Heart right ventricle (tissue), 16 donors: ENCODE measurements at regions of chr2 and their contacts with region 1.

Region 1: GRCh38 chr2:162013514-162014475 is 60.2 kb downstream of the DPP4 start:
- DNase-seq: no peak
- ATAC-seq: peak in 4 of 8 donors; percentile 42 to 65 (median 57)
- H3K4me3 ChIP-seq: peak overlapping the region in 4 of 10 donors; percentile 2 to 33 (median 20)
- H3K27ac ChIP-seq: peak overlapping the region in 5 of 10 donors; percentile 10 to 80 (median 34)
- H3K4me1 ChIP-seq: peaks cover 0 to 31% (median 0%) of the 10 kb centered on the region in 9 donors
- H3K27me3 ChIP-seq: no peaks in the 10 kb centered on the region
- CTCF ChIP-seq: no peak

Region 2: DNA sequence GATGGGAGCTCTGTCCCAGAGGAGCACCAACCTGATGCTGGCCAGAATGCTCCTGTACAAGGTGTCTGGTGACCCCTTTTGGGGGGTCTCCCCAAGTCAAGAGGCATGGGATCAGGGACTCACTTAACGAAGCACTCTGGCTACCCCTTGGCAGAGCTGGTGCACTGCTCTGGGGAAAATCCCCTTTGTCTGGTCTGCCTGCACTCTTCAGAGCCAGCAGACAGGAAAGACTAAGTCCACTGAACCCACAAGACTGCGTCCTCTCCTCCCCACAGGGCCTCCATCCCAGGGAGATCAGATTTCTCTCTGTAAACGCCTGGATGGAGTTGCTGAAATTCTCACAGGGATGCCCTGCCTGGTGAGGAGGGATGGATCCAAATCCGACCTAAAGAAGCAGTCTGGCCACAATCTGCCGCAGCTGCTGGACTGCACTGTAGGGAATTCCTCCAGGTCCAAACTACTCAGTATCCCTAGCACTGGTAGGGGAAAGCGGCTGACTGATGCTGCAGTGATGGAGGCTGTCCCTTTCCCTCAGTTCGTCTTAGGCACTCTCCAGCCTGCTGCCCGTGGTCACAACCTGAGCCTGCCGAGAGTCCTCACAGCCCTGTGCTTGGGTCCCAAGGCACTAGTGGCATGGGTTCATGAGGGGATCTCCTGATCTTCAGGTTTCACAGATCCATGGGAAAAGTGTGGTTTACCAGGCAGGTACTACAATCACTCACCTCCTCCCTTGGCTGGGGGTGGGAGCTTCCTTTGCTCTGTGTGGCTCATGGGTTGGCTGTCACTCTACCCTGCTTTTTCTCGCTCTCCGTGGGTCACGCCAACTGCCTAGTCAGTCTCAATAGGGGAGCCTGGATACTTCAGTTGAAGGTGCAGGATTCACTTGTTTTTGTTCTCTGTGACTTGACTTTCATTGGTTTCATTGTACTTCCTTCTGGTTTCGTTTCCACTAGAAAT is 291.0 kb before region 1 on chr2:
- intact Hi-C with region 1: no loop called
- DNase-seq: no peak
- ATAC-seq: no peak
- H3K4me3 ChIP-seq: no peak overlapping the region
- H3K27ac ChIP-seq: no peak overlapping the region
- H3K4me1 ChIP-seq: no peaks in the 10 kb centered on the region
- H3K27me3 ChIP-seq: no peaks in the 10 kb centered on the region
- CTCF ChIP-seq: no peak

Region 3: GRCh38 chr2:162065767-162066166 is 52.0 kb after region 1 on chr2:
- intact Hi-C with region 1: loop called in 4 of 10 experiments (anchors 5 to 10 kb)
- DNase-seq: no peak
- ATAC-seq: no peak
- H3K4me3 ChIP-seq: no peak overlapping the region
- H3K27ac ChIP-seq: no peak overlapping the region
- H3K4me1 ChIP-seq: peaks cover 0 to 27% (median 9%) of the 10 kb centered on the region in 9 donors
- H3K27me3 ChIP-seq: no peaks in the 10 kb centered on the region
- CTCF ChIP-seq: no peak

Region 4: GRCh38 chr2:162073888-162074645 is 60.3 kb after region 1 on chr2 and contains the start of gene DPP4:
- intact Hi-C with region 1: loop called in 4 of 10 experiments (anchors 5 to 10 kb)
- DNase-seq: peak; percentile 14 to 38
- ATAC-seq: peak; percentile 33 to 82 (median 64)
- H3K4me3 ChIP-seq: peak within 1 kb of the TSS; percentile 52 to 84 (median 63)
- H3K27ac ChIP-seq: peak within 1 kb of the TSS in 9 of 10 donors; percentile 10 to 79 (median 65)
- H3K4me1 ChIP-seq: peaks cover 3 to 62% (median 27%) of the 10 kb centered on the region in 9 donors
- H3K27me3 ChIP-seq: peaks cover 0 to 18% (median 0%) of the 10 kb centered on the region in 7 donors
- CTCF ChIP-seq: peak in 1 of 9 donors; percentile 18
- total RNA-seq, gene DPP4: 1.7 to 8.3 (median 4.1) TPM